ENCODE measurements at regions of chr14 and their contacts with region 1.

Region 1: DNA sequence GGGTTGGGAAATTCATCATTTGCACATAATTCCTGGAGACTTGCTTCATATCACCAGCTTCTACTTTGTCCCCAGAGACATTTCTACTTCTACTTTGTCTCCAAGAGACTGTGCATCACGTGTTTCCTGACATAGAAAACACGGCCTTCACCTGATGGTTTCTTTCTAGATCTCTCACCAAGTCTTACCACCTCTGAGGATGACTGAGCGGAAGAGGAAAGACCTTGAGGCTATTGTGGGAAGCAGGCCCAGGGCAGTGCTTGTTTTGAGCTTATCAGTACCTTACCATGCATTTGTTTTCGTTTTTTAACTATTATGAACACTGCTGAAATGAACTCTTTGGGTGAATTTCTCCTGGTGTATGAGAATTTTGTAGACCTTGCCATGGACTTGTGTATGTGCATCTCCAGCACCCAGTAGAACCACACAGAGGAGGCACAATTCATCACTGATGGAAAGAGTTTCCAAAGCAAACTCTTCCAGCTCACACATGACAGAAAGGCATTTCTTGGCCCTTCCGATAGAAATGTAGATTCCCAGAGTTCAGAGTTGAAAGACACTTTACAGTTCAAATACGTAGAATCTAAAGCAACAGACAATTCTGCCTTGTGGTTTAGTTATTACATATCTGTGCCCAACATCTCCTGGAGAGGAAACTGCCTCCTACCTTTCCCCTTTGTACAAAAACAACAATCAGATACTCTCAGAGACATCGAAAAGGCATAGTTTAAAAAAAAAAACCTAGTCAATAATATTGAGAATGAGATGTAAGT is 434.7 kb downstream of the FUT8 start:
- DNase-seq: peak; percentile 80
- ATAC-seq: peak; percentile 82
- H3K4me3 Mint-ChIP-seq: peak overlapping the region; percentile 45
- H3K27ac Mint-ChIP-seq: peak overlapping the region; percentile 72
- H3K4me1 Mint-ChIP-seq: peaks cover 66% of the 10 kb centered on the region
- H3K27me3 Mint-ChIP-seq: no peaks in the 10 kb centered on the region

Region 2: DNA sequence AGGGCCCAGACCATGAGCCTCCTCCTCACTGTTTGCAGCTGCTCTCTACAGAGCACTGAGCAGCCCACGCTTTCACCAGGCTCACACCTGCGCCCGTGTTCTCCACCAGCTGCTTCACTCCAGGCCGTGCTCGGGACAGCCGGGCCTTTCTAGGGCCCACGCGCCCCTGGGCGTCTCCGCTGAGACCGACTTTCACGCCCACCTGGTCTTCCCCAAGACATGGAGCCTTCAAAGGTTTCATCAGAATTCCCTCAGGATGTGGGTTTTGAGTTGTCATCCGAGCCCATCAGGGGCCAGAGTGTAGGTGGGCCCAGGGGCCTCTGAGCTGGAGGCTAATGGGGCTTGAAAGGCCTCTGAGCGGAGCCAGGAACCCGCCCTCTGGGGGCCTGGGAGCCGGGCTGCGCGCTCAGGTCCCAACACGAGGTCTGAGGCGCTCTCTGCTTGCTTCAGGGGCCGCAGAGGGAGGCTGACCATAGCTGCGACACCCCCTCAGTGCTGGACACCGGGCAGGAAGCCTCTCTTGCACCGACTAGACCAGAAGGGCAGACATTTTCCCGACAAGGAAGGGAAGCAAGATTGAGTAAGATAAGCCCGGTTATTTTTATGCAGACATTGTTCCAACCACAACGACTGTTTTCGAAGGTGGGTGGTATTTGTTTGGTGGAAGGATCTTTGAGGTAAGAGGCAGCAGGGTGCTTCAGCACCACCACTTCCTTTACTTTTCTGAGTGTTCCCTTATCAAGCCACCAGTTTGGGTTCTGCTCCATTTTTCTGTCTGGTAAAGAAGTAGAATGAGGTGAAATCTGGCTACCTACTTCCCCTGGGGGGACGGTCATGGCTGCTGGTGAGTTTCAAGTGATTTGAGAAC is 559.8 kb before region 1 on chr14:
- CTCF ChIA-PET with region 1: no interaction called
- POLR2A ChIA-PET with region 1: no interaction called
- intact Hi-C with region 1: loop called in 1 of 2 experiments (anchors 2 kb)
- DNase-seq: peak; percentile 78
- ATAC-seq: peak; percentile 66
- H3K4me3 Mint-ChIP-seq: peak overlapping the region; percentile 65
- H3K27ac Mint-ChIP-seq: peak overlapping the region; percentile 98
- H3K4me1 Mint-ChIP-seq: peaks cover 70% of the 10 kb centered on the region
- H3K27me3 Mint-ChIP-seq: no peaks in the 10 kb centered on the region

Region 3: GRCh38 chr14:65804752-65805473 is 42.3 kb before region 1 on chr14:
- CTCF ChIA-PET with region 1: interaction called, 4 read pairs
- POLR2A ChIA-PET with region 1: no interaction called
- intact Hi-C with region 1: loop called in 1 of 2 experiments (anchors 2 kb)
- DNase-seq: peak; percentile 23
- ATAC-seq: peak; percentile 68
- H3K4me3 Mint-ChIP-seq: no peak overlapping the region
- H3K27ac Mint-ChIP-seq: no peak overlapping the region
- H3K4me1 Mint-ChIP-seq: peaks cover 13% of the 10 kb centered on the region
- H3K27me3 Mint-ChIP-seq: no peaks in the 10 kb centered on the region

Region 4: DNA sequence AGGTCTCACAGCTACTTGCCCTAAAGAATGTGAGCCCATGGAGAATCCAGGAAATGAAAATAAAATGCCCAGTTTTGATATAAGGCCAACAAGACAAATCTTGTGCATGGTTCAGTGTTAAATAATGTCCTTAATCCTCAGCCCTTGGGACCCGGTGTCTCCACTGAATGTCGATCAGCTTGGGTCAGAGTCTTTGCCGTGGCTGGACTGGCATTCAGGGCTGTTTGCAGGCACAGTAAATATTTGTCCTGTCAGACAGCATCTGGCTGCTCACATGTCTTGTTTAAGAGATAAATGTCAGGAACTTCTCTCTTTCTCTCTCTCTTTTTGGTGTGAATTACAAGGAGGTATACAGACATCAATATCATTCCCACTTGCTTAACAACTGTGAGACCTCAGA is 17.7 kb after region 1 on chr14:
- CTCF ChIA-PET with region 1: no interaction called
- POLR2A ChIA-PET with region 1: interaction called, 3 read pairs
- intact Hi-C with region 1: loop called in 1 of 2 experiments (anchors 2 kb)
- DNase-seq: no peak
- ATAC-seq: no peak
- H3K4me3 Mint-ChIP-seq: no peak overlapping the region
- H3K27ac Mint-ChIP-seq: peak overlapping the region; percentile 14
- H3K4me1 Mint-ChIP-seq: peaks cover 61% of the 10 kb centered on the region
- H3K27me3 Mint-ChIP-seq: no peaks in the 10 kb centered on the region

Region 5: GRCh38 chr14:65927931-65928356 is 80.7 kb after region 1 on chr14:
- CTCF ChIA-PET with region 1: interaction called, 3 read pairs
- POLR2A ChIA-PET with region 1: no interaction called
- intact Hi-C with region 1: loop called (anchors 1 to 2 kb)
- DNase-seq: peak; percentile 93
- ATAC-seq: peak; percentile 96
- H3K4me3 Mint-ChIP-seq: no peak overlapping the region
- H3K27ac Mint-ChIP-seq: peak overlapping the region; percentile 59
- H3K4me1 Mint-ChIP-seq: peaks cover 39% of the 10 kb centered on the region
- H3K27me3 Mint-ChIP-seq: peaks cover 5% of the 10 kb centered on the region

Region 6: DNA sequence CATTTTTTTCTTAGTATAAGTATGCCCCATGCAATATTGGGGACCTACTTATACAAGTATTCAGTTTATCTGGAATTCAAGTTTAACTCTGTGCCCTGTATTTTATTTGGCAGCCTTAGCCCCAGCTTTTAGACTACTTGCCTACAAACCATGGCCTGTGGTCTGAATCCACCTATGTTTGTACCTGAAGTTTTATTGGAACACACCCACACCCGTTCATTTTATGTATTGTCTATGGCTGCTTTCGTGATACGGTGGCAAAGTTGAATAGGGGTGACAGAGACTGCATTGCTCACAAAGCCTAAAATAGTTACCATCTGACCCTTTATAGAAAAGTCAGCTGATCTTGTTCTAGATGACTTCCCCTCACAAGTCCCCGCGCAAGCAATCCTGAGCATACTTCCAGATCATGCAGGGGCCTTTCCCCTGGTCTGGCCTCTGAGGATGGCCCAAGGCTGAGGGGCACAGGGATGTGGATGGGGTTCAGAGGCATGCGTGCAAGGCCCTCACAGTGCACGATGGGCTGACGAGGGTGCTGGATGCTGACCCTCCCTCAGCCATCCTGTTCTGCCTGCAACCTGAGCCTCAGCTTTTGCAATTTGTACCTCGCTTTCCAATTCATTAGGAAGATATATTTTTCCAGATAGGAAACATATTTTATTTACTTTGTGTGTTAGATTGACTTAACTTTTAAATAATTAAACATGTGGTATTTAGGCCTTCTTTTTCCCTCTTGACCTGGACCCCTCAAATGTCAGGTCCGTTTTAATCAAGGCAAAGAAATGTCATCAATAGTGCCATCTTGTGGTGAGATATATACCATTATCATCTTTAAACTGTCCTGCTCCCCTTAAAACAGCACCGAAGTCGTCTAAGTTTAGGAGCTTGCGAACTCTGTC is 111.7 kb after region 1 on chr14:
- CTCF ChIA-PET with region 1: interaction called, 17 read pairs
- POLR2A ChIA-PET with region 1: no interaction called
- intact Hi-C with region 1: no loop called
- DNase-seq: no peak
- ATAC-seq: no peak
- H3K4me3 Mint-ChIP-seq: no peak overlapping the region
- H3K27ac Mint-ChIP-seq: no peak overlapping the region
- H3K4me1 Mint-ChIP-seq: peaks cover 21% of the 10 kb centered on the region
- H3K27me3 Mint-ChIP-seq: no peaks in the 10 kb centered on the region